Activated CD8-positive, alpha-beta T cell treated with anti-CD3 and anti-CD28 coated beads, Interleukin-2, amount 10 ng/mL, durations not matched to agents 7 days and 5 days (primary cell): ENCODE measurements at regions of chr11 and their contacts with region 1.

Region 1: GRCh38 chr11:34468209-34468841 is 29.6 kb downstream of the CAT start:
- DNase-seq: peak; percentile 64
- ATAC-seq: peak; percentile 53
- H3K4me3 Mint-ChIP-seq: no peak overlapping the region
- H3K27ac Mint-ChIP-seq: no peak overlapping the region
- H3K4me1 Mint-ChIP-seq: peaks cover 5% of the 10 kb centered on the region
- H3K27me3 Mint-ChIP-seq: no peaks in the 10 kb centered on the region

Region 2: DNA sequence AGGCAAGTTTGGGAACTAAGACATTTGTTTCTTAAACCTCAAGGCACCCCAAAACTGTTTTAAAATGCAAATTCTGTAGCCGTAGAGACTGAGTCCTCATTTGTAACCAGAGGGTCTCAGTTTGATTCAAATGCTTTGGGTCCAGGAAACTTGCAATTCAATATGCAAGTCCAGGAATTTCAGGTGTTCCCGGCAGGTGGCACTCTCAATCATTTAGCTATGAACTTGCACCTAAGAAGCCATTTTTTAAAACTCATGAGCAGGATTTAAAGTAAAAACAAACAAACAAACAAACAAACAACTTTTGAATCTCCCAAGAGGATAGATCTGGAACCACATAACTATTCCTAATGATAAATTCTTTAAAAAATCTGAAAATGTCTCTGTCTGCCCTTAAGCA is 101.8 kb before region 1 on chr11:
- CTCF ChIA-PET with region 1: interaction called, 24 read pairs
- POLR2A ChIA-PET with region 1: no interaction called
- DNase-seq: no peak
- ATAC-seq: no peak
- H3K4me3 Mint-ChIP-seq: no peak overlapping the region
- H3K27ac Mint-ChIP-seq: no peak overlapping the region
- H3K4me1 Mint-ChIP-seq: peaks cover 11% of the 10 kb centered on the region
- H3K27me3 Mint-ChIP-seq: peaks cover 28% of the 10 kb centered on the region

Region 3: GRCh38 chr11:34449013-34449412 is 19.3 kb before region 1 on chr11:
- CTCF ChIA-PET with region 1: interaction called, 17 read pairs
- POLR2A ChIA-PET with region 1: no interaction called
- DNase-seq: no peak
- ATAC-seq: peak; percentile 47
- H3K4me3 Mint-ChIP-seq: no peak overlapping the region
- H3K27ac Mint-ChIP-seq: peak overlapping the region; percentile 28
- H3K4me1 Mint-ChIP-seq: peaks cover 31% of the 10 kb centered on the region
- H3K27me3 Mint-ChIP-seq: no peaks in the 10 kb centered on the region